ENCODE measurements at regions of chr4 and their contacts with region 1.

Region 1: DNA sequence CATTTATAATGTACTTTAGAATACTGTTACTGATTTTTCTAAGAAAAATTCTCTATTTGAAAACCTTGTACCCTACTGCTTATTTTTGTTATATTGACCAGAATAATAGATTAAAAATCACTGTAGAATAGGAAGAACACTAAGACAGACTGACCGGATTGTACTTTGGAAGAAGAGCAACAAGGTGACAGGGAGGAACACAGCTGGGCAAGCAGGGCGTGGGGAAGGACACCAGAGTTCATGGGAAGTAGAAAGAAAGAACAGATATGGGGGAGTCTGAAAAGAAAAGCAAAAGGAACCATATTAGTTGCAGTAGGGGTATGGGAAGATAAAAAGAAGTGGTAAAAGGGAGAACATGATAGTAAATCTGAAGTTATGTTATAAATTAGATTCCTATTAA is 38.6 kb downstream of the TXK start:
- H3K4me3 ChIP-seq: no peak overlapping the region
- H3K27ac ChIP-seq: no peak overlapping the region
- H3K4me1 ChIP-seq: no peaks in the 10 kb centered on the region
- CTCF ChIP-seq: no peak

Region 2: DNA sequence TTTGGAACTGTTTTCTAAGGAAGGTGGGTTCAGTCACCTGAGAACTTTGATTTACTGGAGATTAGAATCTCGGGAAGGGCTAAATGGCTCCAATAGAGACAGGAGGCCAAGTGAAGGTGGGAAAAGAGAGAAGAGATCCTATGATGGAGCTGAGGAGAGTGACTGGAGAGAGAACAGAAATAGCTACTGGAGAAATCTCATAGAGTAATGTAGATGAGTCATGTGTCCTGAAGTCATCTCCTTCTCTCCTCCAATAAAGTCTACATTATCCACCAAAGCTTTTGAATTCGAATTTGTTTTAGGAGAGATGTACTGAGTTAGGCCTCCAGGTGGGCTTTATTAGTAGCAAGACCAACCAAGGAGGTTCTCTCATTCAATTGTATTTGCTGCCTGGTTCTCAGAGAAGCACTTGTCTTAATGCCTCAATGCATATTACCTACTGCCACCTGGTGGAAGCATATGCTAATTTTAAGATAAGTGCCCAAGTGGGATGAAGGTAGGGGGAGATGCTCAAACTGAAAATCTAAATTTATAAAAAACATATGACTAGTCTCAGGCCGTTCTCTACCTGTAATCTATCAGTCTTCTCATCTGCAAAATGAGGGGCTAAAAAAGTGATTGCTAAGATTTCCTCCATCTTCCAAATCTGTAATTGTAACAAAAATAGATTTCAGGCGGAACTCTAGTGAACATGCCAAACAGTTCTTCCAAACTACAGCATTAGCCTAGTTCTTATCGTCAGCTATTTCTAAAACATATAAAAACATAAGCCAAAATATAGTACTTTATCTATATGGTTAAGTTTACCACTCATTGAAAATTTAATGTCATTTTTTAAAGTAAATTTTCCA is 14.2 kb after region 1 on chr4:
- CTCF ChIA-PET with region 1: interaction called, 12 read pairs
- POLR2A ChIA-PET with region 1: no interaction called
- H3K4me3 ChIP-seq: no peak overlapping the region
- H3K27ac ChIP-seq: no peak overlapping the region
- H3K4me1 ChIP-seq: no peaks in the 10 kb centered on the region
- CTCF ChIP-seq: no peak

Measured in HEK293 (cell line).